CD4-positive, alpha-beta T cell (primary cell): ENCODE measurements at regions of chr10 and their contacts with region 1.

Region 1: DNA sequence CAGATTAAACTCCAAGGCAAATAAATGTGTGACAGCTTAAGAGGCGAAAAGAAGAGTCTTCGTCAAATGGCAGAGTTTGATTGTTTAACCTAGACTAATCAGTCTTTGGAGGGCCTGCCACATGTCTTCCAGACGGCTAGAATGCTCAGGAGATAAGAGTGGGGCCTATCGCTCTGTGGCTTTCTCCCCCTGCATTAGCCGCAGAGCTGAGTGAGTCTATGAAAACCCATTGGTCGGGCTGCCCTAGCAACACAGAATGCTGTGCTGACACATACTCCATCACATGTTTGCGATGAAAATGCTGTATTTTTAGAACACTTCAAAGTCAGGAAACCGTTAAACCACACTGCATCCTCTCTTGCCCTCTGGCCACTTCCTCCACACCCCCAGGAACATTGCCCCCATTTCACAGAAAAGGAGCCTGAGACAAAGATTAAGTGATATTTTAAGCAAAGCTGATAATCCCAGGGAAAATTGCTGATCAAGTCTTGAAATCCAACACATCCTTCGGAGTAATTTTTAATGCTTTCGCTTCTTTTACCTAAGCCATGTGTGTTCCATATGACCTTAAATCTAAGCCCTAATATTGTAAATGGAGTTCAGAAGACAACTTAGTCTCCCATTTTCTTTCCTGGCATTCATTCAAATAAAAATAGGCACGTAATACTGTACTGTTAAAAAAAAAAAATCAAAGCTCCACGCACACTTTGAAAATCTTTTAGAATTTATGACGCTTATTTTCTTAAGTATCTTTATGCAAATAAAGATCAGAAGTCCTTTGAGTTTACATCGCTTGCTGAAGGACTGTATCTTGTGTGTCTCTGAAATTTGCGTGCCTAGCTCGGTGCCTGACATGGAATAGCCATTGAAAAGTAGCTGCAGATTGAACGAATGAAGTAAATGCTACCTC is 161.2 kb downstream of the CELF2 start:
- DNase-seq: peak; percentile 68 to 96 (median 76)
- ATAC-seq: peak; percentile 72
- H3K4me3 ChIP-seq: peak overlapping the region; percentile 39
- H3K4me3 Mint-ChIP-seq: peak overlapping the region; percentile 86
- H3K27ac ChIP-seq: peak overlapping the region; percentile 75 to 84
- H3K27ac Mint-ChIP-seq: no peak overlapping the region
- H3K4me1 ChIP-seq: peaks cover 91% of the 10 kb centered on the region
- H3K4me1 Mint-ChIP-seq: peaks cover 30% of the 10 kb centered on the region
- H3K27me3 ChIP-seq: no peaks in the 10 kb centered on the region
- H3K27me3 Mint-ChIP-seq: no peaks in the 10 kb centered on the region
- CTCF ChIP-seq: no peak

Region 2: GRCh38 chr10:10942441-10942840 is 236.4 kb before region 1 on chr10:
- CTCF ChIA-PET with region 1: no interaction called
- POLR2A ChIA-PET with region 1: no interaction called
- intact Hi-C with region 1: no loop called
- DNase-seq: no peak
- ATAC-seq: no peak
- H3K4me3 ChIP-seq: no peak overlapping the region
- H3K4me3 Mint-ChIP-seq: no peak overlapping the region
- H3K27ac ChIP-seq: no peak overlapping the region
- H3K27ac Mint-ChIP-seq: no peak overlapping the region
- H3K4me1 ChIP-seq: no peaks in the 10 kb centered on the region
- H3K4me1 Mint-ChIP-seq: no peaks in the 10 kb centered on the region
- H3K27me3 ChIP-seq: peaks cover 0 to 5% of the 10 kb centered on the region in 2 experiments
- H3K27me3 Mint-ChIP-seq: peaks cover 9% of the 10 kb centered on the region
- CTCF ChIP-seq: no peak

Region 3: GRCh38 chr10:11113156-11113555 is 65.7 kb before region 1 on chr10:
- CTCF ChIA-PET with region 1: interaction called, 5 read pairs
- POLR2A ChIA-PET with region 1: interaction called, 12 read pairs
- intact Hi-C with region 1: no loop called
- DNase-seq: peak in 9 of 14 experiments; percentile 13 to 79 (median 26)
- ATAC-seq: peak; percentile 96
- H3K4me3 ChIP-seq: no peak overlapping the region
- H3K4me3 Mint-ChIP-seq: peak overlapping the region; percentile 52
- H3K27ac ChIP-seq: no peak overlapping the region
- H3K27ac Mint-ChIP-seq: peak overlapping the region; percentile 68
- H3K4me1 ChIP-seq: peaks cover 7% of the 10 kb centered on the region
- H3K4me1 Mint-ChIP-seq: peaks cover 49% of the 10 kb centered on the region
- H3K27me3 ChIP-seq: no peaks in the 10 kb centered on the region
- H3K27me3 Mint-ChIP-seq: no peaks in the 10 kb centered on the region
- CTCF ChIP-seq: peak; percentile 77

Region 4: GRCh38 chr10:11153766-11154165 is 25.1 kb before region 1 on chr10:
- CTCF ChIA-PET with region 1: interaction called, 10 read pairs
- POLR2A ChIA-PET with region 1: interaction called, 1,077 read pairs
- intact Hi-C with region 1: loop called (anchors 1 to 2 kb)
- DNase-seq: no peak
- ATAC-seq: no peak
- H3K4me3 ChIP-seq: no peak overlapping the region
- H3K4me3 Mint-ChIP-seq: peak overlapping the region; percentile 39
- H3K27ac ChIP-seq: peak overlapping the region in 1 of 2 donors; percentile 27
- H3K27ac Mint-ChIP-seq: peak overlapping the region; percentile 97
- H3K4me1 ChIP-seq: peaks cover 84% of the 10 kb centered on the region
- H3K4me1 Mint-ChIP-seq: peaks cover 100% of the 10 kb centered on the region
- H3K27me3 ChIP-seq: no peaks in the 10 kb centered on the region
- H3K27me3 Mint-ChIP-seq: no peaks in the 10 kb centered on the region
- CTCF ChIP-seq: no peak

Region 5: GRCh38 chr10:11225935-11226334 is 47.1 kb after region 1 on chr10:
- CTCF ChIA-PET with region 1: interaction called, 3 read pairs
- POLR2A ChIA-PET with region 1: interaction called, 12 read pairs
- intact Hi-C with region 1: loop called in 1 of 2 experiments (anchors 5 kb)
- DNase-seq: peak in 12 of 14 experiments; percentile 22 to 85 (median 56)
- ATAC-seq: peak; percentile 72
- H3K4me3 ChIP-seq: peak overlapping the region; percentile 19
- H3K4me3 Mint-ChIP-seq: peak overlapping the region; percentile 47
- H3K27ac ChIP-seq: peak overlapping the region; percentile 74 to 78
- H3K27ac Mint-ChIP-seq: peak overlapping the region; percentile 89
- H3K4me1 ChIP-seq: peaks cover 82% of the 10 kb centered on the region
- H3K4me1 Mint-ChIP-seq: peaks cover 99% of the 10 kb centered on the region
- H3K27me3 ChIP-seq: no peaks in the 10 kb centered on the region
- H3K27me3 Mint-ChIP-seq: no peaks in the 10 kb centered on the region
- CTCF ChIP-seq: no peak

Region 6: GRCh38 chr10:11255796-11256444 is 77.1 kb after region 1 on chr10:
- CTCF ChIA-PET with region 1: interaction called, 3 read pairs
- POLR2A ChIA-PET with region 1: interaction called, 3 read pairs
- intact Hi-C with region 1: loop called in 1 of 2 experiments (anchors 5 kb)
- DNase-seq: no peak
- ATAC-seq: no peak
- H3K4me3 ChIP-seq: no peak overlapping the region
- H3K4me3 Mint-ChIP-seq: no peak overlapping the region
- H3K27ac ChIP-seq: peak overlapping the region in 1 of 2 donors; percentile 26
- H3K27ac Mint-ChIP-seq: peak overlapping the region; percentile 93
- H3K4me1 ChIP-seq: peaks cover 32% of the 10 kb centered on the region
- H3K4me1 Mint-ChIP-seq: peaks cover 89% of the 10 kb centered on the region
- H3K27me3 ChIP-seq: no peaks in the 10 kb centered on the region
- H3K27me3 Mint-ChIP-seq: no peaks in the 10 kb centered on the region
- CTCF ChIP-seq: no peak

Region 7: GRCh38 chr10:11930342-11930978 is 751.6 kb after region 1 on chr10:
- CTCF ChIA-PET with region 1: no interaction called
- POLR2A ChIA-PET with region 1: no interaction called
- intact Hi-C with region 1: no loop called
- DNase-seq: no peak
- ATAC-seq: no peak
- H3K4me3 ChIP-seq: no peak overlapping the region
- H3K4me3 Mint-ChIP-seq: no peak overlapping the region
- H3K27ac ChIP-seq: no peak overlapping the region
- H3K27ac Mint-ChIP-seq: no peak overlapping the region
- H3K4me1 ChIP-seq: no peaks in the 10 kb centered on the region
- H3K4me1 Mint-ChIP-seq: no peaks in the 10 kb centered on the region
- H3K27me3 ChIP-seq: no peaks in the 10 kb centered on the region
- H3K27me3 Mint-ChIP-seq: no peaks in the 10 kb centered on the region
- CTCF ChIP-seq: no peak